PC-9 (cell line): ENCODE measurements at regions of chr11 and their contacts with region 1.

Region 1: DNA sequence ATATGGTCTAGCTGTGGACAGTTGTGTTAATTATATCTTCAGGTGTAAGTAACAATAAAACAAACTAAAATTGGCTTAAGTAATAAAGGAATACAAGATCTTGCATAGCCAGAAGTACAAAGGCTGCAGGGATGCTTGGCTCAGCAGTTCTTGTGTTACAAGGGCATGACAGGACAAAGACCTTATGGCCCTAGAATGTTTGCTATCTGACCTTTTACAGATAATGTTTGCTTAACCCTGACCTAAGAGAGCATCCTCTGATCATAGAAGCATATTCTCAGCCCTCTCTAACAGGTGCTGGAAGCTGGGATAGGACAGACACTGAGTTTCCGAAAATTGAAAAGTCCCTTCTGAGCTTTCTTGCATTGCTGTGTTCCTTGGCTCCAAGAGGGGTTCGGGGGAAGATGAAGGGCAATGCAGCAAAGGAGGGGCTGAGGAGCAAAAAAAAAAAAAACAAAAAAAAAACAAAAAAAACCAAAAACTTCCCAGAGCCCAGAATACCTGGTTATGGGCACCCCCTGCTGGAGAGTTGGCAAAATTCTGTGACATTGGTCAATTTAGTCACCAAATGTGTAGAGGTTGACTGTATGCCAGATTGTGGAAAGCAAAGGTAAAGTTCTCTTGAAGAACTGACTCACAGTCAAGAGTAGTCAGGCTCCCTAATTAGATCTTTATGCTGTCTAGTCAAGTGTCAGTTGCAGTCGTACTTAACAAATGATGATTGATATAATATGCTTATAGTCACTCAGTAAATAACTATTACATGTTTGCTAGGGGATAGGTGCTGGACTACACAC is 10.4 kb upstream of the HIKESHI start:
- DNase-seq: peak; percentile 41 to 60
- H3K4me3 ChIP-seq: no peak overlapping the region
- H3K27ac ChIP-seq: no peak overlapping the region
- H3K4me1 ChIP-seq: no peaks in the 10 kb centered on the region
- H3K27me3 ChIP-seq: no peaks in the 10 kb centered on the region
- CTCF ChIP-seq: peak; percentile 95

Region 2: DNA sequence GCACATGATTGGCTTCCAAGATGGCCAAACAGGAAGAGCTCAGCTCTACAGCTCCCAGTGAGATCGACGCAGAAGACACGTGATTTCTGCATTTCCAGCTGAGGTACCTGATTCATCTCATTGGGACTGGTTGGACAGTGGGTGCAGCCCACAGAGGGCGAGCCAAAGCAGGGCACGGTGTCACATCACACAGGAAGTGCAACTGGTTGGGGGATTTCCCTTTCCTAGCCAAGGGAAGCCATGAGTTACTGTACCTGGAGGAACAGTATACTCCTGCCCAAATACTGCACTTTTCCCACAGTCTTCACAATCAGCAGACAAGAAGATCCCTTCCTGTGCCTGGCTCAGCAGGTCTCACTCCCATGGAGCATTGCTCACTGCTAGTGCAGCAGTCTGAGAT is 795.7 kb before region 1 on chr11:
- CTCF ChIA-PET with region 1: no interaction called
- POLR2A ChIA-PET with region 1: no interaction called
- intact Hi-C with region 1: no loop called
- DNase-seq: no peak
- H3K4me3 ChIP-seq: no peak overlapping the region
- H3K27ac ChIP-seq: no peak overlapping the region
- H3K4me1 ChIP-seq: no peaks in the 10 kb centered on the region
- H3K27me3 ChIP-seq: no peaks in the 10 kb centered on the region
- CTCF ChIP-seq: no peak

Region 3: GRCh38 chr11:85941380-85941973 is 350.2 kb before region 1 on chr11:
- CTCF ChIA-PET with region 1: no interaction called
- POLR2A ChIA-PET with region 1: no interaction called
- intact Hi-C with region 1: loop called (anchors 2 kb)
- DNase-seq: peak in 1 of 2 experiments; percentile 22
- H3K4me3 ChIP-seq: no peak overlapping the region
- H3K27ac ChIP-seq: no peak overlapping the region
- H3K4me1 ChIP-seq: no peaks in the 10 kb centered on the region
- H3K27me3 ChIP-seq: no peaks in the 10 kb centered on the region
- CTCF ChIP-seq: peak; percentile 69

Region 4: DNA sequence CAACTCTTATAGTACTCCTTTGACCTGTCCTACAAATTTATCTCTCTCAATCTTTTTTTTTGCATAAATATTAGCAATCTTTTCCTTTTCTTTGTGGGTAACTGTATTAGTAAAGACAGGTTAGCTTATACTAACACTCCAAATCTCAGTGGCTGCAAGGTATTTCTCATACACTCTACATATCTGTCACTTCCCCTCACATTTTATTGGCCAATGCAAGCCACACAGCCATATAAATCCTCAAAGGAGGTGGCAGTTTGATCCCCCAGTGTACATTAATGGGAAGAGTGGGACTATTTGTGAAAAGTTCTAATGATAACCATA is 89.7 kb before region 1 on chr11:
- CTCF ChIA-PET with region 1: no interaction called
- POLR2A ChIA-PET with region 1: no interaction called
- intact Hi-C with region 1: no loop called
- DNase-seq: no peak
- H3K4me3 ChIP-seq: peak overlapping the region; percentile 39; the same call in 1 of the 2 replicates
- H3K27ac ChIP-seq: no peak overlapping the region
- H3K4me1 ChIP-seq: no peaks in the 10 kb centered on the region
- H3K27me3 ChIP-seq: no peaks in the 10 kb centered on the region
- CTCF ChIP-seq: no peak

Region 5: GRCh38 chr11:86314646-86315045 is 23.0 kb after region 1 on chr11:
- CTCF ChIA-PET with region 1: no interaction called
- POLR2A ChIA-PET with region 1: no interaction called
- intact Hi-C with region 1: no loop called
- DNase-seq: no peak
- H3K4me3 ChIP-seq: no peak overlapping the region
- H3K27ac ChIP-seq: no peak overlapping the region
- H3K4me1 ChIP-seq: no peaks in the 10 kb centered on the region
- H3K27me3 ChIP-seq: no peaks in the 10 kb centered on the region
- CTCF ChIP-seq: no peak